IMR-90 (cell line): ENCODE measurements at regions of chr3 and their contacts with region 1.

Region 1: DNA sequence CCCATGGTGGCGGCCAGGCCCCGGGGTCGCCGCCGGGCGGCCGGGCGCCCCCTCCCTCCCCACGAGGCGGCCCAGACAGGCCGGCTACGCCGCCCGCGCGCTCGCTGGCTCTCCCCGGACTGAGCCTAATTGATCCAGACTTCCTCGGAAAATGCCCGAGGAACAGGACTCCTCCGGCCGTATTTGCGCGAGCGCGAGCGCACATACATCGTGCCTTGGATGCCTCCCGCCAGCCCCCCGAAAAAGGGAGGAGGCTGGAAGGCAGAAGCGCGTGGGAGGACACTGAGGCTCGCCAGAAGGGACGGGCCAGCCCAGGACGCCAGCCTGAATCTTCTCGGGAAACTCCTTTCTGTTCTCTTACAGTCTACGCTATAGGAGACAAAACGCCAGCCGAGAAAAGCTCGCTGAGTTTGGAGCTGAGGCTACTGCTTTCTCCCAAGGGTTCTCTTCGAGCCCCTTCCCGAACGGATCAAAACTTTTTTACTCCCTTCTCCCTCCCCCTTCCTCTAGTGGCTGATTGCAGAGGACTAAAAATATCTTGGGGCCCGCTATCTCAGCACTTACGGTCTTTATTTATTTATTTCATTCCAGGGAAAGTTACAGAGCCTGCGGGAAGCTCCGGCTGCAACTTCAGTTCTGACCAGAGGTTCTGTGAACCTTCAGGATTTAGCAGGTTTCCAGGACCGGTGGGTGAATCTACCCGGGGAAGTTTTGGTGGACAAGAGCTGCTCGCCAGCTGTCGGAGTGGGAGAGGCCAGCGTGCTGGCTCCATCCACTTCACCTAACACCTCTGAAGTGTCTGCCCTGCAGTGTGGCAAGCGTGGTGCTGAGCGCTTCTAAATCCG is at the start of gene PDZRN3:
- DNase-seq: peak; percentile 82
- ATAC-seq: peak; percentile 66
- H3K4me3 ChIP-seq: peak within 1 kb of the TSS; percentile 71
- H3K27ac ChIP-seq: peak within 1 kb of the TSS; percentile 68
- H3K4me1 ChIP-seq: peaks cover 8% of the 10 kb centered on the region
- H3K27me3 ChIP-seq: no peaks in the 10 kb centered on the region
- CTCF ChIP-seq: no peak
- POLR2A ChIP-seq: peak; percentile 71; the same call in 1 of the 2 replicates
- RAD21 ChIP-seq: 0 out of 2 replicates have a peak, but pooled peaks have one; percentile 6
- total RNA-seq, gene PDZRN3: 17.0 and 17.8 TPM in 2 replicates

Region 2: DNA sequence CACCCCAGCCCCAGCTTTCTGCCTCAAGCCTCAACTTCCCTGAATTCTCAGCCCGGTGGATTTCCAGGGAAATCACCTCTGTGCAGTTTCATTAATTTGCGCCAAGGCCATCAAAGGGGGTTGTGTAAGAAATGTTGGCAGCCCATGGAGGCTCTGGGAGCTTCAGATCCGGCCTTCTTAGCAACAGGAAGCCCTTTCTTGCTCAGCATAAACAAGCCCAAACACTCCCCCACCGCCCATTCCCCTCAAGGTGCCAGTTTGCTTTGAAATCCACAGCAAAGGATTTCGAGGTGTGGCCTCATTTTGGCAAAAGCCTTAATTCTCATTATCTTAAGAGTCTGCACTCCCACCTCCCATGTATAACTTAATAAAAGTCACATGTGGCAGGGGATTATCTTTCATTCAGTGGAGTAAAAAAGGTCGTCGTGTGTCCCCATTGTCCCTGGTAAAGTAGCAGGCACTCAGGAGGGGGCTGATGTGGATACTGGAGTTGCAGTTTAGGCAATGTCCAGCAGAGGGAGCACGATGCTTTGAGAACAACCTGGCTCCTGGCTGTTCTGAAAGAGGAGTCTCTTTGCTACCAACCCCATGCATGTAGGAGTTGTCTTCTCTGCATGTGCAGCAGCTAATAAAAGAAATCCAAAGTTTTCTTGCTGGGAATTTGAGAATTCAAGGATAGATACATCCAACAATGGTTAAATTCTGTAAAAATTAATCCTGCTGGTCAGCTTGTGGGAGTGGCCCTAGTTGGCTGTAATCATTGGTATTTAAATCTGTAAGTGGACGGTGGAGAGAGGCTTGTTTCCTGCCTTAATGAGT is 524.1 kb before region 1 on chr3:
- CTCF ChIA-PET with region 1: no interaction called
- POLR2A ChIA-PET with region 1: no interaction called
- dilution Hi-C with region 1: no loop called
- in situ Hi-C with region 1: no loop called
- intact Hi-C with region 1: loop called (anchors 5 kb)
- DNase-seq: peak; percentile 75
- ATAC-seq: peak; percentile 99
- H3K4me3 ChIP-seq: no peak overlapping the region
- H3K27ac ChIP-seq: no peak overlapping the region
- H3K4me1 ChIP-seq: no peaks in the 10 kb centered on the region
- H3K27me3 ChIP-seq: peaks cover 9% of the 10 kb centered on the region
- CTCF ChIP-seq: peak; percentile 87
- POLR2A ChIP-seq: no peak
- RAD21 ChIP-seq: peak; percentile 90

Region 3: DNA sequence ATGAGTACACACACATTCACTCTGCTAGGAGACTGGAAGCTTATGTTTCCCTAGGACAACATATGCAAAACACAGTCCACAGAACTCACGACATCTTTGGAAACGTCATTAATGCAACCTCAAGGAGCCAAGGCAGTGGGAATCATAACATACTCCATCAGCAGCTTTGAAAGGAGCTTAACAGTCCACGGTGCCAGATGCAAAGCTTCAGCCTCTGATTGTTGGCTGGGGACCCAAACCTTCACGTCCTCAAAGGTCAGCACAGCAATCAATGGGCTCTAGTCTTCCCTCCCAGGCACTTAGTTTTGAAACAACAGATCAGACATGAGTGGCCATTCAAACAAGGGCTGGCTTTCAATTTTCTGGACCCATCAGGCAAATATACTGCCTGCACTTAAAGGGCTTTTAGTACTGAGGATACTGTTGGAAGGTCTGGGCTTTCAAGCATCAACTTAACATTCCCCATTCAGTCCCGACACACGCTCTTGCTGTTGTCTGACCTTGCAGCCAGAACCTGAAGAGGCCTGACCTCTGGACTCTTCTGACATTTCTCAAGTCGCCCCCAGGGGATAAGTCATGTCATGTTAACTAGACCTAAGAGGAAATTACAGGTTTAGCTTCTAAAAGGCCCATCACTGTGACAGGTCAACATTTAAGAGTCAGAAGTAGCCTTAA is 223.3 kb before region 1 on chr3:
- CTCF ChIA-PET with region 1: no interaction called
- POLR2A ChIA-PET with region 1: no interaction called
- dilution Hi-C with region 1: no loop called
- in situ Hi-C with region 1: no loop called
- intact Hi-C with region 1: no loop called
- DNase-seq: peak; percentile 60
- ATAC-seq: peak; percentile 25
- H3K4me3 ChIP-seq: no peak overlapping the region
- H3K27ac ChIP-seq: peak overlapping the region; percentile 78; the same call in 1 of the 2 replicates
- H3K4me1 ChIP-seq: peaks cover 21% of the 10 kb centered on the region
- H3K27me3 ChIP-seq: no peaks in the 10 kb centered on the region
- CTCF ChIP-seq: no peak
- POLR2A ChIP-seq: no peak
- RAD21 ChIP-seq: no peak

Region 4: GRCh38 chr3:73461547-73461946 is 163.5 kb before region 1 on chr3:
- CTCF ChIA-PET with region 1: no interaction called
- POLR2A ChIA-PET with region 1: no interaction called
- dilution Hi-C with region 1: no loop called
- in situ Hi-C with region 1: no loop called
- intact Hi-C with region 1: loop called (anchors 5 kb)
- DNase-seq: peak; percentile 72
- ATAC-seq: peak; percentile 63
- H3K4me3 ChIP-seq: no peak overlapping the region
- H3K27ac ChIP-seq: peak overlapping the region; percentile 31; the same call in 1 of the 2 replicates
- H3K4me1 ChIP-seq: peaks cover 8% of the 10 kb centered on the region
- H3K27me3 ChIP-seq: no peaks in the 10 kb centered on the region
- CTCF ChIP-seq: no peak
- POLR2A ChIP-seq: no peak
- RAD21 ChIP-seq: no peak

Region 5: GRCh38 chr3:73502609-73503583 is 122.1 kb before region 1 on chr3:
- CTCF ChIA-PET with region 1: interaction called, 10 read pairs
- POLR2A ChIA-PET with region 1: no interaction called
- dilution Hi-C with region 1: loop called (anchors 25 kb)
- in situ Hi-C with region 1: loop called (anchors 25 kb)
- intact Hi-C with region 1: loop called (anchors 1 kb)
- DNase-seq: peak; percentile 98
- ATAC-seq: peak; percentile 84
- H3K4me3 ChIP-seq: peak overlapping the region; percentile 1; the same call in 1 of the 2 replicates
- H3K27ac ChIP-seq: peak overlapping the region; percentile 70; the same call in 1 of the 2 replicates
- H3K4me1 ChIP-seq: peaks cover 10% of the 10 kb centered on the region; the same call in 1 of the 2 replicates
- H3K27me3 ChIP-seq: no peaks in the 10 kb centered on the region
- CTCF ChIP-seq: peak; percentile 94
- POLR2A ChIP-seq: no peak
- RAD21 ChIP-seq: peak; percentile 96

Region 6: DNA sequence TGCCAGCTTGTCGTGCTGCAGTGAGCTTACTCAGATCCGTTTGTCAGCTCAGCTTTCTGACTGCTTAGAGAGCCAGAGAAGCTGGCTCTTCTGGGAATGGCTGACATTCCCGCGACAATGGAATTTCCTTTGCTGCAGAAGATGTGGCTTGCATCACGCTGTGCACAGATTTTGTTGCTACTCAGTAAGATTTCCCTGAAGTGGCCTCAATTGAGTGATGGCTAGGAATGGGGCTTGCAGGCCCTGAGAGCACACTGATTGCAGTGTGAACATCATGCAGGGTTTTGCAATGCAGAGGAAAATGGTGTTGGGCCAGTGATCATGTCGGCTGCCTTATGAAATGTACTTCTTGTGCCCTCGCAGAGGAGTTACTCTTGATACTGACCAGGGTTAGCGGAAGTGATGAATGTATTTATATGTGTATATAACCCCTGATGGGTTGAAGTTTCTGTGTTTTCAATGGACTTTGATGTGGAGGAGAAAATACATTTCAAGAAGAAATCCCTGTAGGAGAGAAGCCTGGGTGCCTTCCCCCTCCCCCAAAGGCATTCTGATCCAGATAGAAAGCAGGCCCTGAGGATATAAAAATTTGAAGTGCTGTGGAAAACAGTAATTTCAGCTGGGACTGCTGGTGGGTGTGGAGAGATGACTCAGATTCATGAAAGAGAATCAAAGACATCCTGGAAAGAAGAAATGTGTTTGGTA is 102.2 kb after region 1 on chr3:
- CTCF ChIA-PET with region 1: no interaction called
- POLR2A ChIA-PET with region 1: no interaction called
- dilution Hi-C with region 1: no loop called
- in situ Hi-C with region 1: no loop called
- intact Hi-C with region 1: loop called (anchors 5 kb)
- DNase-seq: peak; percentile 83
- ATAC-seq: peak; percentile 86
- H3K4me3 ChIP-seq: no peak overlapping the region
- H3K27ac ChIP-seq: peak overlapping the region; percentile 82; the same call in 1 of the 2 replicates
- H3K4me1 ChIP-seq: peaks cover 11% of the 10 kb centered on the region
- H3K27me3 ChIP-seq: no peaks in the 10 kb centered on the region
- CTCF ChIP-seq: no peak
- POLR2A ChIP-seq: no peak
- RAD21 ChIP-seq: no peak

Region 7: GRCh38 chr3:73766599-73767381 is 141.7 kb after region 1 on chr3:
- CTCF ChIA-PET with region 1: interaction called, 7 read pairs
- POLR2A ChIA-PET with region 1: no interaction called
- dilution Hi-C with region 1: no loop called
- in situ Hi-C with region 1: no loop called
- intact Hi-C with region 1: loop called (anchors 1 kb)
- DNase-seq: peak; percentile 80
- ATAC-seq: peak; percentile 65
- H3K4me3 ChIP-seq: peak overlapping the region; percentile 37; the same call in 1 of the 2 replicates
- H3K27ac ChIP-seq: peak overlapping the region; percentile 99
- H3K4me1 ChIP-seq: peaks cover 8% of the 10 kb centered on the region
- H3K27me3 ChIP-seq: no peaks in the 10 kb centered on the region
- CTCF ChIP-seq: no peak
- POLR2A ChIP-seq: no peak
- RAD21 ChIP-seq: no peak

Region 8: GRCh38 chr3:73786321-73786807 is 161.3 kb after region 1 on chr3:
- CTCF ChIA-PET with region 1: interaction called, 3 read pairs
- POLR2A ChIA-PET with region 1: no interaction called
- dilution Hi-C with region 1: no loop called
- in situ Hi-C with region 1: no loop called
- intact Hi-C with region 1: loop called (anchors 5 kb)
- DNase-seq: peak; percentile 97
- ATAC-seq: peak; percentile 90
- H3K4me3 ChIP-seq: no peak overlapping the region
- H3K27ac ChIP-seq: peak overlapping the region; percentile 16; the same call in 1 of the 2 replicates
- H3K4me1 ChIP-seq: 0 out of 2 replicates have a peak, but pooled peaks cover 2% of the 10 kb centered on the region
- H3K27me3 ChIP-seq: no peaks in the 10 kb centered on the region
- CTCF ChIP-seq: no peak
- POLR2A ChIP-seq: no peak
- RAD21 ChIP-seq: no peak

Region 9: GRCh38 chr3:73966733-73967132 is 341.7 kb after region 1 on chr3:
- CTCF ChIA-PET with region 1: no interaction called
- POLR2A ChIA-PET with region 1: no interaction called
- dilution Hi-C with region 1: no loop called
- in situ Hi-C with region 1: no loop called
- intact Hi-C with region 1: no loop called
- DNase-seq: no peak
- ATAC-seq: no peak
- H3K4me3 ChIP-seq: no peak overlapping the region
- H3K27ac ChIP-seq: no peak overlapping the region
- H3K4me1 ChIP-seq: no peaks in the 10 kb centered on the region
- H3K27me3 ChIP-seq: no peaks in the 10 kb centered on the region
- CTCF ChIP-seq: no peak
- POLR2A ChIP-seq: no peak
- RAD21 ChIP-seq: no peak